A549 (cell line): ENCODE measurements at regions of chr10 and their contacts with region 1.

Region 1: GRCh38 chr10:97037365-97038361 is 148.1 kb downstream of the SLIT1 start:
- DNase-seq: peak; percentile 85 to 87
- ATAC-seq: peak; percentile 90 to 98
- H3K4me3 ChIP-seq: peak overlapping the region; percentile 33
- H3K27ac ChIP-seq: peak overlapping the region; percentile 58 to 64
- H3K4me1 ChIP-seq: no peaks in the 10 kb centered on the region
- CTCF ChIP-seq: peak; percentile 86
- EP300 ChIP-seq: no peak
- POLR2A ChIP-seq: no peak
- RAD21 ChIP-seq: peak; percentile 81 to 84

Region 2: DNA sequence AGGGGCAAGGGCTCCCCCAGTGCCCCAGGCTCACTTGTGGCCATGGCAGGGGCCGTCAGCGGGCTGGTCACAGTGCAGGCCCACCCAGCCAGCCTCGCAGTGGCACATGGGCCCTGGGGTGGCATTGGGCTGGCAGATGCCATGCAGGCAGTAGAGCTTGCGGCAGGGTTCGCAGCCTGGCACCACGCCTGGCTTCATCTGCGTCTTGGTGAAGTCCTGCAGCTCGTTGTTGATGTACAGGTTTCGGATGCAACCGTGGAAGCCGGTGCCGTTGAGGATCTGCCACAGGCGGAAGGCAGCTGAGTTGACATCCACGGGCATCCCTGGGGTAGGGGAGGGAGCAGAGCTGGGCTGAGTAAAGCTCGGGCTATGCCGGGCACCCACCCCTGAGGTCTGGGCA is 35.0 kb before region 1 on chr10:
- CTCF ChIA-PET with region 1: interaction called, 20 read pairs
- POLR2A ChIA-PET with region 1: no interaction called
- DNase-seq: no peak
- ATAC-seq: no peak
- H3K4me3 ChIP-seq: no peak overlapping the region
- H3K27ac ChIP-seq: no peak overlapping the region
- H3K4me1 ChIP-seq: peaks cover 12% of the 10 kb centered on the region
- CTCF ChIP-seq: no peak
- EP300 ChIP-seq: no peak
- POLR2A ChIP-seq: no peak
- RAD21 ChIP-seq: no peak

Region 3: GRCh38 chr10:97020452-97021400 is 16.9 kb before region 1 on chr10:
- CTCF ChIA-PET with region 1: interaction called, 70 read pairs
- POLR2A ChIA-PET with region 1: no interaction called
- DNase-seq: no peak
- ATAC-seq: no peak
- H3K4me3 ChIP-seq: no peak overlapping the region
- H3K27ac ChIP-seq: no peak overlapping the region
- H3K4me1 ChIP-seq: peaks cover 28% of the 10 kb centered on the region
- CTCF ChIP-seq: no peak
- EP300 ChIP-seq: no peak
- POLR2A ChIP-seq: no peak
- RAD21 ChIP-seq: no peak

Region 4: GRCh38 chr10:97048649-97049427 is 11.2 kb after region 1 on chr10:
- CTCF ChIA-PET with region 1: interaction called, 15 read pairs
- POLR2A ChIA-PET with region 1: no interaction called
- DNase-seq: no peak
- ATAC-seq: no peak
- H3K4me3 ChIP-seq: no peak overlapping the region
- H3K27ac ChIP-seq: no peak overlapping the region
- H3K4me1 ChIP-seq: no peaks in the 10 kb centered on the region; the same call in 2 of the 3 replicates
- CTCF ChIP-seq: no peak
- EP300 ChIP-seq: no peak
- POLR2A ChIP-seq: no peak
- RAD21 ChIP-seq: no peak

Region 5: DNA sequence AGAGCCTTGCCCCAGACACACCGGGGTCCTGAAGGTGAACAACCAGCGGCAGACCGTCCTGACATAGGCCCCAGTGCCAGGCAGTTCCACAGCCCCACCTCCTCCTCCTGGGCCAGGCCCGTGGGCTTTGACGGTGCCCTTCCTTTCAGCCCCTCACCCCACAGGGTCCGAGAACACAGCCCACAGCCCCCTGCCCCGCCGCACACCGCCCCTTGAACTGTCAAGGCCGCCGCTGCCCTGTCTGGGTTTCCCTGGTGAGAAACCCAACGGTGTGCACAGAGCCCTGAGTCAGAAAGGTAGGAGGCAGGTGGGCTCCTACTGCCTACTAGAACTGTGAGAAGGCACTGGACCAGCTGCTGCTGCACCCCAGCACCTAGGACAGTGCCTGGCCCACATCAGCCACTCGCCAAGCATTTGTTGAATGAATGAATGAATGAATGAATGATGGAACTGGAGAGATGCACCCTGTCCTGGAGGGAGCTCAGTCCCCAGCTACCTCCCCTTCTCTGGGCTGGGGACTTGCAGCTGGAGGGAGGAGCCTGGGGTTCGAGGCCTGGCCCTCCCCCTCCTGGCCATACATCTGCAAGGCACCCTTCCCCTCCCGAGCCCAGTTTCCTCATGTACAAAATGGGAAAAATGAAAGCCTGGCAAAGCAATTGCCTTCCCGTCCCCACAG is 30.2 kb after region 1 on chr10:
- CTCF ChIA-PET with region 1: interaction called, 64 read pairs
- POLR2A ChIA-PET with region 1: no interaction called
- DNase-seq: peak in 1 of 2 experiments; percentile 26
- ATAC-seq: no peak
- H3K4me3 ChIP-seq: no peak overlapping the region
- H3K27ac ChIP-seq: peak overlapping the region; percentile 66 to 78; a peak in 3 of 6 replicates
- H3K4me1 ChIP-seq: peaks cover 42% of the 10 kb centered on the region
- CTCF ChIP-seq: no peak
- EP300 ChIP-seq: no peak
- POLR2A ChIP-seq: no peak
- RAD21 ChIP-seq: no peak

Region 6: GRCh38 chr10:97117372-97117771 is 79.7 kb after region 1 on chr10:
- CTCF ChIA-PET with region 1: interaction called, 24 read pairs
- POLR2A ChIA-PET with region 1: no interaction called
- DNase-seq: peak; percentile 24 to 42
- ATAC-seq: peak; percentile 55 to 83; a peak in 5 of 6 replicates
- H3K4me3 ChIP-seq: no peak overlapping the region
- H3K27ac ChIP-seq: no peak overlapping the region
- H3K4me1 ChIP-seq: no peaks in the 10 kb centered on the region
- CTCF ChIP-seq: peak; percentile 71
- EP300 ChIP-seq: no peak
- POLR2A ChIP-seq: no peak
- RAD21 ChIP-seq: peak; percentile 66 to 69

Region 7: GRCh38 chr10:97234400-97234799 is 196.7 kb after region 1 on chr10:
- CTCF ChIA-PET with region 1: interaction called, 14 read pairs
- POLR2A ChIA-PET with region 1: no interaction called
- DNase-seq: peak; percentile 13 to 51
- ATAC-seq: peak; percentile 54 to 58; a peak in 3 of 6 replicates
- H3K4me3 ChIP-seq: no peak overlapping the region
- H3K27ac ChIP-seq: no peak overlapping the region
- H3K4me1 ChIP-seq: peaks cover 12% of the 10 kb centered on the region
- CTCF ChIP-seq: peak; percentile 70
- EP300 ChIP-seq: no peak
- POLR2A ChIP-seq: no peak
- RAD21 ChIP-seq: peak; percentile 71